Astrocyte of the cerebellum (primary cell): ENCODE measurements at regions of chr5 and their contacts with region 1.

Region 1: DNA sequence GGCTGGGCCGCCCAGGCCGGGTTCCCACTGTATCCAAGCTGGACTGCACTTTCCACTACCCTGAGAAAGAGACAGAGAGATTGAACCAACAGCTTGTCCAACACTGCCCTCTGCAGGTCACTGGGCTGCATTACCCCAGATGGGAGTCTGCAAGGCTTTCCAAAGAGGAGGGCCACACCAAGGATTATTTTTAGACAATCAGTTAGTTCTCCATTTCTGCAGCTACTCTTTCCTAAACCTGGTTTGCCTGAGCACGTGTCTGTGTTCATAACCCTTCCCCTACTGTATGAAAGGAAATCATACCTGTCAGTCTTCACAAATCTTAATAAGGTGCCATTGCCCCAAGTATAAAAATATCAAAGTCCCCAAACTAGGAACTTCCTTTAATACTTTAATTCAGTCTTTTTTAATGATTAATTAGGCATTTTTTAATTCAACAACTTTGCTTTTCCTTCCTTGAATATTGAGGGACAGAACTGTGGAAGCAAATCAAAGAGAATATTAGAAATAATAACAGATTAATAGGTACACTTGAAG is 13.4 kb upstream of the FGF1 start:
- DNase-seq: peak; percentile 76
- H3K4me3 ChIP-seq: no peak overlapping the region
- CTCF ChIP-seq: peak; percentile 95

Region 2: DNA sequence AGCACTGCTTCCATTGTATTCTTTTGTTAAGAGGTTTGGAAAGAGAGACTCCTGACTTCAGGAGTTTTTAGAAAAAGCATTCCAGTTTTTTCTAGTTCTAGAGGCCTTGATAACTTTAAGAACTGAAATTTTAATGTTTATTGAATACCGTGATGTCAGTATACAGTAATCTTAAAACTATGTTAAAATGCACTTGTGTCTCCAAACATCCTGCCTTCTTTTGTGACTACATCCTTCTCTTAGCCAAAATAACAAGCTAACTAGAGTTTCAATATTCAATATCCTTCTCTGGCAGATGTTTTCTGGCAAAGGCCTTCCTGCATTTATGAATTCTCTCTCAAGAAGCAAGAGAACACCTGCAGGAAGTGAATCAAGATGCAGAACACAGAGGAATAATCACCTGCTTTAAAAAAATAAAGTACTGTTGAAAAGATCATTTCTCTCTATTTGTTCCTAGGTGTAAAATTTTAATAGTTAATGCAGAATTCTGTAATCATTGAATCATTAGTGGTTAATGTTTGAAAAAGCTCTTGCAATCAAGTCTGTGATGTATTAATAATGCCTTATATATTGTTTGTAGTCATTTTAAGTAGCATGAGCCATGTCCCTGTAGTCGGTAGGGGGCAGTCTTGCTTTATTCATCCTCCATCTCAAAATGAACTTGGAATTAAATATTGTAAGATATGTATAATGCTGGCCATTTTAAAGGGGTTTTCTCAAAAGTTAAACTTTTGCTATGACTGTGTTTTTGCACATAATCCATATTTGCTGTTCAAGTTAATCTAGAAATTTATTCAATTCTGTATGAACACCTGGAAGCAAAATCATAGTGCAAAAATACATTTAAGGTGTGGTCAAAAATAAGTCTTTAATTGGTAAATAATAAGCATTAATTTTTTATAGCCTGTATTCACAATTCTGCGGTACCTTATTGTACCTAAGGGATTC is 547.5 kb before region 1 on chr5:
- in situ Hi-C with region 1: loop called (anchors 25 kb)
- DNase-seq: peak; percentile 80
- H3K4me3 ChIP-seq: no peak overlapping the region
- CTCF ChIP-seq: peak; percentile 73

Region 3: DNA sequence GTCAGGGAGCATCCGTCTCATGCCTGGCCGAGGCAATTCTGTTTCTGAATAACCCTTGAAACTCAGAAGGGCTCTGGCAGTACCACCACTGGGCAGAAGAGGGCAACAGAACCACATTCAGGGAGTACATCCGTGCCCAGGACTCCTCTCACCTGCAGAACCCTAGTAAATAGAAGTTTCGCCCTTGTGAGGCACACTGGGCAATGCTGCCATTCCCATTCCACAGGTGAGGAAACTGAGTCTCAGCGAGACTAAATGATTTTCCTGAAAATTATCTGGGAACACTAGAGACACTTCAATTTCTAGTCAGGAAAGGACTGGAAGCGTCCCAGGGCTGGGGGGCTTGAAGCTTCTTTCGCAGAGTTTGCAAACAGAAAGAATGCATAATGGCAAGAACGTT is 88.1 kb before region 1 on chr5:
- in situ Hi-C with region 1: loop called (anchors 5 kb)
- DNase-seq: no peak
- H3K4me3 ChIP-seq: no peak overlapping the region
- CTCF ChIP-seq: peak; percentile 77

Region 4: GRCh38 chr5:142783601-142784341 is 84.5 kb after region 1 on chr5:
- in situ Hi-C with region 1: no loop called
- DNase-seq: peak; percentile 18
- H3K4me3 ChIP-seq: no peak overlapping the region
- CTCF ChIP-seq: peak; percentile 12

Region 5: GRCh38 chr5:143311428-143311827 is 612.2 kb after region 1 on chr5:
- in situ Hi-C with region 1: no loop called
- DNase-seq: no peak
- H3K4me3 ChIP-seq: no peak overlapping the region
- CTCF ChIP-seq: no peak